Heart right ventricle (tissue), 16 donors: ENCODE measurements at regions of chr1 and their contacts with region 1.

Region 1: DNA sequence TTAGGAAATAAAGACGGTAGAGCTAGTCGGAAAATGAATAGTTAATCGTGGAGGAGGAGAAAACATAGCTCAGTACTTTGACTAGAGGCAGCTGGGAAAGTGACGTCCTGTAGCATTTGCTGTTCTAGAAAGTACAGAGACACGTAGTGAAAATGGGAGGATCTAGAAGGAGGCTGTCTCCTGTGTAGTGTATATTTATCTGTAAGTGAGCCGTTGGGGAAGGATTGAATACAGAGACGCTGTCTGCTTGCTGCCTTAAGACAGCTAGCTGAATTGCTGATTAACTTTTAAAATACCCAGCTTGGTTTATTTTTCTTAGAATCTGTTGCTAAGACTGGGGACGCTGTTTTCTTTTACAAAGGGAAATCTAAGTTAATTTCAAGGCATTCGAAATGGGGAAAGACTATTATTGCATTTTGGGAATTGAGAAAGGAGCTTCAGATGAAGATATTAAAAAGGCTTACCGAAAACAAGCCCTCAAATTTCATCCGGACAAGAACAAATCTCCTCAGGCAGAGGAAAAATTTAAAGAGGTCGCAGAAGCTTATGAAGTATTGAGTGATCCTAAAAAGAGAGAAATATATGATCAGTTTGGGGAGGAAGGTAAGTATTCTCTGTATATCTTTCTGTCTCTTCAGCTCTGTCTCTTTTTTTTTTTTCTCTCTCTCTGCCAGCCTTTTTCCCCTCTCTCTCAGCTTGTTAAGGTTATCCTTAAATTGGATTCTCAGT is at the start of gene DNAJB4:
- DNase-seq: peak in 1 of 2 donors; percentile 91
- ATAC-seq: peak; percentile 98 to 100 (median 99)
- H3K4me3 ChIP-seq: peak within 1 kb of the TSS; percentile 33 to 74 (median 61)
- H3K27ac ChIP-seq: peak within 1 kb of the TSS; percentile 81 to 95 (median 90)
- H3K4me1 ChIP-seq: peaks cover 0 to 58% (median 33%) of the 10 kb centered on the region in 9 donors
- H3K27me3 ChIP-seq: no peaks in the 10 kb centered on the region
- CTCF ChIP-seq: no peak
- total RNA-seq, gene DNAJB4: 72.4 to 178 (median 141) TPM

Region 2: GRCh38 chr1:77744576-77744975 is 260.3 kb before region 1 on chr1:
- intact Hi-C with region 1: no loop called
- DNase-seq: no peak
- ATAC-seq: peak in 2 of 8 donors; percentile 37 to 51
- H3K4me3 ChIP-seq: no peak overlapping the region
- H3K27ac ChIP-seq: no peak overlapping the region
- H3K4me1 ChIP-seq: peaks cover 0 to 27% (median 10%) of the 10 kb centered on the region in 9 donors
- H3K27me3 ChIP-seq: no peaks in the 10 kb centered on the region
- CTCF ChIP-seq: no peak

Region 3: DNA sequence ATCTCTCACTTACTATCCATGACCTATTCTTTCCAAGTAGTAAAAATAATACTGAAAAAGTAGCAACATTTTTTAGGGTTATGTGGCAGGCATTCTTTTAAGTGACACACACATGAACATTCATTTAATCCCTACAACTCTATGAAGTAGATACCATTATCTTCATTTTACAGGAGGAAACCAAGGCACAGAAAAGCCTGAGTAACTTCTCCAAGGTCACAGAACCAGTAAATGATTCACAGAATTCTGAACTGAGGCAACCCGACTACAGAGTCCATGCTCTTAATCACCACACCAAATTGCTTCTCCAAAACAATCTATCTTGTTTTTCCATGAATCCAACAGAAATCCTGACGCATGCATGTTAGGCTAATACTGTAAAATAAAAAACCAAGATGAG is 43.5 kb before region 1 on chr1:
- intact Hi-C with region 1: loop called in 1 of 10 experiments (anchors 10 kb)
- DNase-seq: no peak
- ATAC-seq: no peak
- H3K4me3 ChIP-seq: no peak overlapping the region
- H3K27ac ChIP-seq: no peak overlapping the region
- H3K4me1 ChIP-seq: no peaks in the 10 kb centered on the region
- H3K27me3 ChIP-seq: no peaks in the 10 kb centered on the region
- CTCF ChIP-seq: no peak

Region 4: GRCh38 chr1:77978969-77979876 is 25.7 kb before region 1 on chr1 and contains the start of gene FUBP1:
- intact Hi-C with region 1: loop called in 5 of 10 experiments (anchors 1 to 2 kb)
- DNase-seq: peak; percentile 89 to 98
- ATAC-seq: peak; percentile 94 to 97 (median 94)
- H3K4me3 ChIP-seq: peak within 1 kb of the TSS; percentile 64 to 85 (median 74)
- H3K27ac ChIP-seq: peak within 1 kb of the TSS; percentile 83 to 99 (median 97)
- H3K4me1 ChIP-seq: peaks cover 11 to 60% (median 55%) of the 10 kb centered on the region in 9 donors
- H3K27me3 ChIP-seq: no peaks in the 10 kb centered on the region
- CTCF ChIP-seq: peak; percentile 55 to 89 (median 76)
- total RNA-seq, gene FUBP1: 54.1 to 77.6 (median 72.1) TPM

Region 5: DNA sequence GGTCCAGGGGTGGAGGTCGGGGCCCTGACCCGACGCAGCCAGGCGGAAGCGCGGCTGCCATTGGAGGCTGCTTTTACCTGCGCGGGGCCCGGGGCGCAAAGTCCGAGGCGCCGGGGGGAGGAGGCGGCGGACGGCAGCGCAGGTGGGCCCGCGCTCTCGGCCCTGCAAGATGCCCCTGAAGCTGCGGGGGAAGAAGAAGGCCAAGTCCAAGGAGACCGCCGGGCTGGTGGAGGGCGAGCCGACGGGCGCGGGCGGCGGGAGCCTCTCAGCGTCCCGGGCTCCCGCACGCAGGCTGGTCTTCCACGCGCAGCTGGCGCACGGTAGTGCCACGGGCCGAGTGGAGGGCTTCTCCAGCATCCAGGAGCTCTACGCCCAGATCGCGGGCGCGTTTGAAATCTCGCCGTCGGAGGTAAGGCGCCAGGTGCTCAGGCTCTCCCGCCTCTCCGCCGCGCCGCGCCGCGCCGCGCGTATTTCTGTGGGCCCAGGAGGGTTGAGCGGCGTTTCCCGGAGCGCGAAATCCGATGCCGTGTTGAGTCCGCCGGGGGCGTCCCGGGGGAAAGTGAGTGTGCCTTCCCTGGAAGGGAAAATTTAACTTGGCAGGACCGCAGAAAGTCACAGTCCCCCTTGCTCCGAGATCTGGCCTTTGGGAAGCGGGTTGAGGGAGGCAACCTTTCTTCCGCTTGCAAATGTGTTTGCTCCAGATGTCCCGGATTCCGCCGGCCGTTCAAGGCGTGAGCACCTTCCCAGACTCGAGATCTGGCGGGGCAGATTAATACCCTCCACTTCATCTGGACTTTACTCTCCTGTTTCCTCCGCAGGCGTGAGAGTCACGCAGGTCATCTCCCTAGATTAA is 41.3 kb after region 1 on chr1 and contains the start of gene GIPC2:
- intact Hi-C with region 1: loop called in 3 of 10 experiments (anchors 2 to 5 kb)
- DNase-seq: peak; percentile 24 to 49
- ATAC-seq: peak; percentile 60 to 79 (median 68)
- H3K4me3 ChIP-seq: peak within 1 kb of the TSS; percentile 64 to 93 (median 77)
- H3K27ac ChIP-seq: peak within 1 kb of the TSS in 9 of 10 donors; percentile 64 to 88 (median 81)
- H3K4me1 ChIP-seq: peaks cover 0 to 55% (median 32%) of the 10 kb centered on the region in 9 donors
- H3K27me3 ChIP-seq: peaks cover 0 to 38% (median 0%) of the 10 kb centered on the region in 7 donors
- CTCF ChIP-seq: no peak
- total RNA-seq, gene GIPC2: 1.3 to 7.4 (median 3.7) TPM

Region 6: GRCh38 chr1:78079580-78079979 is 74.7 kb after region 1 on chr1:
- intact Hi-C with region 1: loop called in 1 of 10 experiments (anchors 2 kb)
- DNase-seq: no peak
- ATAC-seq: no peak
- H3K4me3 ChIP-seq: no peak overlapping the region
- H3K27ac ChIP-seq: peak overlapping the region in 9 of 10 donors; percentile 6 to 88 (median 57)
- H3K4me1 ChIP-seq: peaks cover 3 to 63% (median 45%) of the 10 kb centered on the region in 9 donors
- H3K27me3 ChIP-seq: no peaks in the 10 kb centered on the region
- CTCF ChIP-seq: no peak

Region 7: DNA sequence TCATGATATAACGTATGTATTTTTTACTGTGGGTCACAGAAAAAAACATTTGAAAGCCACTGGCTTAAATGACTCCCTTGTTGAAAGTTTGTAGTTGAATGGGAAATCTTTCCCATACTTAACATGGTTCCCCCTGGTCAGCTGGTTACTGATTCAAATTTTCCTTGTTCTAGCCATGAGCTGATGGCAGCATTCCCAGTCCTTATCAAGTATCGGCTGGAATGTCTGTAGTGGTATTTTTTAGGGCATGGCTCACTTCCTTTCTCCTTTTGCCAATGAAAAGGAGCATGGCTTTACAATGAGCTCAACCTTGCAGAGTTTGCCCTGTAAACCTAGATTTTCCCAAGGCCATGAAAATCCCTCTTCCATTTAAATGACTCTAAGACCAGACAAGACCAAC is 96.6 kb after region 1 on chr1:
- intact Hi-C with region 1: loop called in 1 of 10 experiments (anchors 10 kb)
- DNase-seq: peak in 1 of 2 donors; percentile 80
- ATAC-seq: peak; percentile 77 to 96 (median 90)
- H3K4me3 ChIP-seq: no peak overlapping the region
- H3K27ac ChIP-seq: peak overlapping the region in 9 of 10 donors; percentile 3 to 79 (median 66)
- H3K4me1 ChIP-seq: peaks cover 0 to 53% (median 33%) of the 10 kb centered on the region in 9 donors
- H3K27me3 ChIP-seq: no peaks in the 10 kb centered on the region
- CTCF ChIP-seq: no peak

Region 8: DNA sequence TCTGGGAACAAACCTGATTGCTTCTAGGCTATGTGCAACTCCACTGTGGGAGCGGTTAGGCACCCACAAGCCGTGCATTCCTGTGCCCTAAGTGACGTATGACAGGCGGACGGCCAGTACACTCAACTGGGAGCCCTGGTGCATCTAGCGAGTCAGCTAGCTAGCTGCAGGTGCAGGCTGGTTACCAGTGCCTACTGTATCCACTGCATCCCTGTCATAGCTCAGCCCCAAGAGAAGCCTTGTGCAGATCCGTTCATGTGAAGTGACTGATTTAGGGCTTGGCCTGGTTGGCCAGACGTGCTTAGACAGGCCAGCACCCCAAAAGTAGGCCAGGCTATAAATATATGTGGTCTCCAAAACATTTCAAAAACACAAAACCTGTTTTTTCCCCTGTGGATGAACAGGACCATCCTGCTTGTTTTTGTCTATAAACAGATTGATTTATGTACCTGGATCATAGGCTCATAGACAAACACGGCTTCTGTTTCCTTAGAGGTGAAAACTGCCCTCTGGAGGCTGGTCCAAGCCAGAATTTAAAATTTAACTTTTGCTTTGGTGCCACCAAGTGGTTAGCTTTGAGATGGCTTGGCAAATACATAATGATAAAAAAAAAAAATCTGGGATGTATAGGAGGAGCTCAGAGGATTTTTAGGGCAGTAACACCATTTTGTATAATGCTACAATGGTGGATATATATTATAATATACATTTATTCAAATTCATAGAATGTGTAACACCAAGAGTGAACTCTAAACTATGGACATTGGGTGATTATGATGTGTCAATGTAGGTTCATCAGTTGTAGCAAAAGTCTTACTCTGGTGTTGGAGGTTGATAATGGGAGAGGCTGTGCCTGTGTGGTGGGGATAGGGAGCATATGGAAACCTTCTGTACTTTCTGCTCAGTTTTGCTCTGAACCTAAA is 109.4 kb after region 1 on chr1:
- intact Hi-C with region 1: loop called in 4 of 10 experiments (anchors 5 to 10 kb)
- DNase-seq: peak; percentile 32 to 66
- ATAC-seq: peak; percentile 72 to 86 (median 82)
- H3K4me3 ChIP-seq: peak overlapping the region in 1 of 10 donors; percentile 6
- H3K27ac ChIP-seq: peak overlapping the region in 6 of 10 donors; percentile 7 to 51 (median 22)
- H3K4me1 ChIP-seq: peaks cover 0 to 9% (median 5%) of the 10 kb centered on the region in 9 donors
- H3K27me3 ChIP-seq: no peaks in the 10 kb centered on the region
- CTCF ChIP-seq: peak; percentile 71 to 98 (median 88)